ENCODE measurements at regions of chr1 and their contacts with region 1.

Region 1: DNA sequence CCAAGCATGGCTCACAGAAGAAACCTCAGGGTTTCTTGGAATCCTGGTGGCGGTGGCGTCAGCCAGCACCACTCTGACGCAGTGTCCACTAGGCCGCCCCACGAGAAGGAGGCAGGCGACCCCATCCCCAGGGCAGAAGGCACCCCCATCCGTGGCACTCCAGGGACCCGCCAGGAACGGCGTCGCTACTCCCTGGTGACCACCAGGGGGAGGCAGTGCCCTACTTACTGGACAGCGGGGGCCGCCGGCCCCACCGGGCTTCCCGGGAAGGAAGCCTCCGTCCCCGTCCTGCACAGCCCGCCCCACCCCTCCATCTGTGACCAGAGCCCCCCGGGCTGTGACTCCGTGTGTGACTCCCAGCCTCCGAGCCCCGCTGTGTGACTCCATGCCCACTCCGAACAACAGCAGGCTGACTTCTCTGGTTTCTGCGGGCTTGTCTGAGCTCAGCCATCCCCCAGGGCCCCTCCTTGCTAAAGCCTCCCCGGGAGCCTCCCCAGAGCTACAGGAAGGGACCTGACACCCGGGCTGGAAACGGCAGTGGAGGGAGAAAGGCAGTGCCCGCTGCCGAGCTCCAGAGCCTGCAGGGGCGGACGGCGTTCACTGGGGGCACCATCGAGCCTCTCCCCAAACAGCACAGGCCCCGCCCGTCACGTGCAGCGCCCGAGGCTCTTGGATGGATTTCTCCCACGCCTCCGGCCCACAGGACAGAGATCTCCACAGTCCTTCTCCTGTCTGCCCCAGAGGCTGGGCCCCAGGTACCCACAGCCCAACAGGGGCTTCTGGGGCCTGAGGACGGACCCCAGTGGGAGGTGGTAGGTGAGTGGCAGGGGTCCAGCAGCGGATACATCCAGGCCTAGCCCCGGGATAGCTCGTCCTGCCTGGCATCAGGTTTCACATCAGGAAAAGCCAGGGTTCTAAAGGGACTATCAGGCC is 21.1 kb downstream of the KIF17 start:
- DNase-seq: peak; percentile 54 to 81 (median 73)
- ATAC-seq: peak; percentile 93
- H3K4me3 ChIP-seq: peak overlapping the region; percentile 92 to 98
- H3K4me3 Mint-ChIP-seq: peak overlapping the region; percentile 89
- H3K27ac ChIP-seq: peak overlapping the region in 1 of 2 experiments; percentile 31
- H3K27ac Mint-ChIP-seq: no peak overlapping the region
- H3K4me1 ChIP-seq: peaks cover 7% of the 10 kb centered on the region
- H3K4me1 Mint-ChIP-seq: peaks cover 2% of the 10 kb centered on the region
- H3K27me3 ChIP-seq: no peaks in the 10 kb centered on the region
- H3K27me3 Mint-ChIP-seq: peaks cover 2% of the 10 kb centered on the region
- CTCF ChIP-seq: peak; percentile 98

Region 2: DNA sequence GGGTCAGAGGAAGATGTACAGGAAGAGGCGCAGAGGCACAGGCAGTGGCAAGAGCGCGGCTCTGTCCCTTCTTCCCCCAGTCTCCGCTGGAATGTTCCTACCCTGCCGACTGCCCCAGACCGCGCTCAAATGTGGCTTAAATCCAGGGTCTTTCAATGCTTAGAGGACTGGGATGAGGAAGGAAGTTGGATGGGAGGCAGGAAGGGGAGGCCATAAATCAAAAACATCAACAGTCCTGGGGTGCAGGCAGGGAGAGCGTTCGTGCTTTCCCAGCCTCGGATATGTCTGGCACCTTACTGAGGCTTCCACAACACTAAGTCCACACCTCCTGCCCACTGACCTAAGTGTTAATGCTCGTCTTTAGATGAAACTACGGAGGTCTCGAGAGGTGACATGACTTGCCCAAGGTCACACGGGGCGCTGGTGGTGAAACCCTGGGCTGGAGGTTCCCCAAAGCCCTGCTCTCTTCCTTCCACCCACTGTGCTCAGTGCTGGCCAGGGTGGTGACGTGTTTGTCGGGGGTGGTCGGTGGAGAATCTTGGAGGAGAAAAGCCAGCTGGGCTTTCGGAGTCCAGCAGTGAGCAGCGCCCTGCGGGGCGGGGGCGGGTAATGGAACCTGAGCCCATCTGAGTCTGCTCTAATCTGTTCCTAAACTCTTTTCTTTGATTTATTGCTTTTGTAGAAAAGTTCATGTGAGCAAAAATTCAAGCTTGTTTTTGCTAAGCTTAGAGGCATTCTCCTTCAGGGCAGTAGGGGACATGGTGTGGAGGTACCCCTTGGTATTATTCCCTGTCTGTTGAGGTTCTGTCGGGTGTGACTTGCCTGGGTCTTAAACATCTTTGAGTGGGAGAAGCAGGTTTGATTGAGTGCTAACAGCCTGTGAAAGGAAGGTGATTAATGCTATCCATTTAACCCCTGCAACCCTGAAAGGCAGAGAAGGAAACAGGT is 107.1 kb before region 1 on chr1:
- CTCF ChIA-PET with region 1: no interaction called
- POLR2A ChIA-PET with region 1: no interaction called
- intact Hi-C with region 1: no loop called
- DNase-seq: peak in 1 of 9 experiments; percentile 15
- ATAC-seq: no peak
- H3K4me3 ChIP-seq: no peak overlapping the region
- H3K4me3 Mint-ChIP-seq: no peak overlapping the region
- H3K27ac ChIP-seq: no peak overlapping the region
- H3K27ac Mint-ChIP-seq: no peak overlapping the region
- H3K4me1 ChIP-seq: no peaks in the 10 kb centered on the region
- H3K4me1 Mint-ChIP-seq: peaks cover 5% of the 10 kb centered on the region
- H3K27me3 ChIP-seq: peaks cover 0 to 13% of the 10 kb centered on the region in 2 experiments
- H3K27me3 Mint-ChIP-seq: peaks cover 62% of the 10 kb centered on the region
- CTCF ChIP-seq: no peak

Region 3: GRCh38 chr1:20717452-20718342 is 21.0 kb after region 1 on chr1 and contains the start of gene KIF17:
- CTCF ChIA-PET with region 1: interaction called, 11 read pairs
- POLR2A ChIA-PET with region 1: no interaction called
- intact Hi-C with region 1: no loop called
- DNase-seq: peak; percentile 37 to 83 (median 59)
- ATAC-seq: peak; percentile 67
- H3K4me3 ChIP-seq: peak within 1 kb of the TSS; percentile 20 to 41
- H3K4me3 Mint-ChIP-seq: peak within 1 kb of the TSS; percentile 75
- H3K27ac ChIP-seq: no peak within 1 kb of the TSS
- H3K27ac Mint-ChIP-seq: peak within 1 kb of the TSS; percentile 16
- H3K4me1 ChIP-seq: peaks cover 4% of the 10 kb centered on the region
- H3K4me1 Mint-ChIP-seq: peaks cover 7% of the 10 kb centered on the region
- H3K27me3 ChIP-seq: peaks cover 6 to 8% of the 10 kb centered on the region in 2 experiments
- H3K27me3 Mint-ChIP-seq: peaks cover 28% of the 10 kb centered on the region
- CTCF ChIP-seq: no peak
- total RNA-seq, gene KIF17: not detected

Region 4: GRCh38 chr1:20732588-20733360 is 36.1 kb after region 1 on chr1 and contains the start of gene SH2D5:
- CTCF ChIA-PET with region 1: interaction called, 11 read pairs
- POLR2A ChIA-PET with region 1: no interaction called
- intact Hi-C with region 1: loop called (anchors 1 kb)
- DNase-seq: peak; percentile 39 to 86 (median 64)
- ATAC-seq: peak; percentile 65
- H3K4me3 ChIP-seq: peak within 1 kb of the TSS; percentile 60 to 67
- H3K4me3 Mint-ChIP-seq: peak within 1 kb of the TSS; percentile 79
- H3K27ac ChIP-seq: peak within 1 kb of the TSS in 1 of 2 experiments; percentile 4
- H3K27ac Mint-ChIP-seq: no peak within 1 kb of the TSS
- H3K4me1 ChIP-seq: peaks cover 21% of the 10 kb centered on the region
- H3K4me1 Mint-ChIP-seq: peaks cover 23% of the 10 kb centered on the region
- H3K27me3 ChIP-seq: peaks cover 0 to 5% of the 10 kb centered on the region in 2 experiments
- H3K27me3 Mint-ChIP-seq: peaks cover 21% of the 10 kb centered on the region
- CTCF ChIP-seq: peak; percentile 62
- total RNA-seq, gene SH2D5: not detected

Region 5: GRCh38 chr1:20981915-20982314 is 285.3 kb after region 1 on chr1:
- CTCF ChIA-PET with region 1: no interaction called
- POLR2A ChIA-PET with region 1: no interaction called
- intact Hi-C with region 1: loop called in 1 of 2 experiments (anchors 5 kb)
- DNase-seq: peak in 1 of 9 experiments; percentile 3
- ATAC-seq: no peak
- H3K4me3 ChIP-seq: no peak overlapping the region
- H3K4me3 Mint-ChIP-seq: no peak overlapping the region
- H3K27ac ChIP-seq: no peak overlapping the region
- H3K27ac Mint-ChIP-seq: peak overlapping the region; percentile 1
- H3K4me1 ChIP-seq: no peaks in the 10 kb centered on the region
- H3K4me1 Mint-ChIP-seq: no peaks in the 10 kb centered on the region
- H3K27me3 ChIP-seq: no peaks in the 10 kb centered on the region
- H3K27me3 Mint-ChIP-seq: no peaks in the 10 kb centered on the region
- CTCF ChIP-seq: no peak

Region 6: GRCh38 chr1:21192284-21192683 is 495.6 kb after region 1 on chr1:
- CTCF ChIA-PET with region 1: interaction called, 188 read pairs
- POLR2A ChIA-PET with region 1: interaction called, 6 read pairs
- intact Hi-C with region 1: loop called (anchors 1 kb)
- DNase-seq: no peak
- ATAC-seq: no peak
- H3K4me3 ChIP-seq: no peak overlapping the region
- H3K4me3 Mint-ChIP-seq: no peak overlapping the region
- H3K27ac ChIP-seq: no peak overlapping the region
- H3K27ac Mint-ChIP-seq: no peak overlapping the region
- H3K4me1 ChIP-seq: no peaks in the 10 kb centered on the region
- H3K4me1 Mint-ChIP-seq: peaks cover 2% of the 10 kb centered on the region
- H3K27me3 ChIP-seq: no peaks in the 10 kb centered on the region
- H3K27me3 Mint-ChIP-seq: peaks cover 8% of the 10 kb centered on the region
- CTCF ChIP-seq: no peak

Region 7: DNA sequence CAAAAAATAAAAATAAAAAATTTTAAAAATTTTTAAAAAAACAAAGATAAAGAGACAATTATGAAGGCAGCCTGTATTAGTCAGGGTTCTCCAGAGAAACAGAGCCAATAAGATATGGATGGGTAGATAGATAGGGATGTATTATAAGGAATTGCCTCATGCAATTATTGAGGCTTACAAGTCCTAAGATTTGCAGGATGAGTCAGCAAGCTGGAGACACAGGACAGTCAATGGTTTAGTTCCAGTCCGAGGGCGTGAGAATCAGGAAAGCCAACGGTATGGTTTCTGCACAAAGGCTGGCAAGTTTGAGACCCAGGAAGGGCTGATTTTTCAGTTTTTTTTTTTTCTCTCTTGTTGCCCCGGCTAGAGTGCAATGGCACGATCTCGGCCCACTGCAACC is 504.1 kb after region 1 on chr1:
- CTCF ChIA-PET with region 1: interaction called, 188 read pairs
- POLR2A ChIA-PET with region 1: interaction called, 6 read pairs
- intact Hi-C with region 1: loop called (anchors 1 kb)
- DNase-seq: no peak
- ATAC-seq: no peak
- H3K4me3 ChIP-seq: no peak overlapping the region
- H3K4me3 Mint-ChIP-seq: no peak overlapping the region
- H3K27ac ChIP-seq: no peak overlapping the region
- H3K27ac Mint-ChIP-seq: no peak overlapping the region
- H3K4me1 ChIP-seq: no peaks in the 10 kb centered on the region
- H3K4me1 Mint-ChIP-seq: no peaks in the 10 kb centered on the region
- H3K27me3 ChIP-seq: no peaks in the 10 kb centered on the region
- H3K27me3 Mint-ChIP-seq: peaks cover 5% of the 10 kb centered on the region
- CTCF ChIP-seq: no peak

Region 8: DNA sequence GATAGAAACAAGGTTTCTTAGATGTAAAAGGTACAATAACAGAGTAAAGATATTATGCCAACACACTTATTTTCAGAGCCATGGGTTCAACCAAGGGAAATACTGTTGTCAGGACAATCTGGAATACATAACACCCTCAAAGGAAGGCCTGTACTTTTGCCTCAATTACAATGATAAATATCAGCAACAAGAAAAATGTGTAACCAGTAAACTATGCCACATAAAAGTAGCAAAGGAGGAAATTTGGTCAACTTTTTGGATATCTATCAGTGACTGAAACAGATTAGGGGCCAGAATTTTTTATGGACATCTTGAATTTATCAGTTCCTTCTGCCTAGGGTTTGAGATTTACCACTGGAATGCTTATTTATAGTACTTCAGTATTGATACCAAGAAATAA is 997.1 kb after region 1 on chr1:
- CTCF ChIA-PET with region 1: no interaction called
- POLR2A ChIA-PET with region 1: no interaction called
- intact Hi-C with region 1: no loop called
- DNase-seq: no peak
- ATAC-seq: no peak
- H3K4me3 ChIP-seq: no peak overlapping the region
- H3K4me3 Mint-ChIP-seq: no peak overlapping the region
- H3K27ac ChIP-seq: no peak overlapping the region
- H3K27ac Mint-ChIP-seq: no peak overlapping the region
- H3K4me1 ChIP-seq: no peaks in the 10 kb centered on the region
- H3K4me1 Mint-ChIP-seq: no peaks in the 10 kb centered on the region
- H3K27me3 ChIP-seq: no peaks in the 10 kb centered on the region
- H3K27me3 Mint-ChIP-seq: no peaks in the 10 kb centered on the region
- CTCF ChIP-seq: no peak